BJ (cell line): ENCODE measurements at regions of chr7 and their contacts with region 1.

Region 1: GRCh38 chr7:83410989-83411591 is 237.8 kb downstream of the SEMA3E start:
- DNase-seq: peak; percentile 4
- H3K4me3 ChIP-seq: no peak overlapping the region
- H3K27me3 ChIP-seq: 0 out of 2 replicates have a peak, but pooled peaks cover 1% of the 10 kb centered on the region
- CTCF ChIP-seq: peak; percentile 67

Region 2: GRCh38 chr7:83394776-83395175 is 16.3 kb before region 1 on chr7:
- CTCF ChIA-PET with region 1: no interaction called
- POLR2A ChIA-PET with region 1: no interaction called
- DNase-seq: no peak
- H3K4me3 ChIP-seq: no peak overlapping the region
- H3K27me3 ChIP-seq: no peaks in the 10 kb centered on the region
- CTCF ChIP-seq: no peak

Region 3: GRCh38 chr7:83655951-83656556 is 245.0 kb after region 1 on chr7:
- CTCF ChIA-PET with region 1: interaction called, 11 read pairs
- POLR2A ChIA-PET with region 1: no interaction called
- DNase-seq: no peak
- H3K4me3 ChIP-seq: no peak overlapping the region
- H3K27me3 ChIP-seq: no peaks in the 10 kb centered on the region; the same call in 1 of the 2 replicates
- CTCF ChIP-seq: peak; percentile 87